ENCODE measurements at regions of chr1 and their contacts with region 1.

Region 1: DNA sequence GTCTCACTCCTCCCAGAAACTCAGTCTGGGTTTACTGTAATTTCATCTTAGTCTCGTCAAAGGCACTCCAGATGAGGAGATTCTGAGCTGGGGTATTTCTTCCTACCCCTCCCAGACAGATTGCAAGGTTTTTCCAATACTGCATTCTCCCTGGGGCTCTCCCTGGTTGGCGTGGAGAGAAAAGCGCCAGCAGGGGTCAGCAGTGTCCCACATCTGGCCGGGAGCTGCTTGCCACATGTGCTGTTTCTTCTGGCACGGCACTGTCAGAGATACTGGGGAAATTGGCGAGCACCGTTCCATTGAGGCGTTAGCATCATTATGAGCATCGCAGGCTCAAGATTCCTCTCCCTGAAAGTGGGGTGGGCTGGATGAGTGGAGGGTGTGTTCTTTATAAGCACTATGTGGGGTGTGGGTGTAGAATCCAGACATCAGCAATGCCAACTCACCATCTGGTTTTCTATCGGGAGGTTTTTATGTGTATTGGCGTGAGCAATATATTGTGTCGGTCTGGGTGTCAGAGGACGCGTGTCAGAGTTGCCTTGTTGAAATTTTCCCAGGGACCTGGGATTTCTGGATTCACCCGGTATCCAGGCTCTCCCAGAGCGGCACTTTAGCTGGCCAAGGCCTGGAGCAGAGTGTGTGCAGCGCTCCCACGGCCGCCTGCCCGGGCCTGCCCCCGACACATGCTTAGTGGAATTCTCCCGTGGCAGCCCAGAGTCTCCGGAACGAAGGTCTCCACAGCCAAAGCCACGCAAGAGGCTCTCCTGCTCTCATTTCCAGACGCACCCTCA is 8.0 kb upstream of the NAV1 start:
- DNase-seq: peak; percentile 90

Region 2: GRCh38 chr1:201593200-201593921 is 62.4 kb after region 1 on chr1:
- intact Hi-C with region 1: loop called (anchors 10 kb)
- DNase-seq: no peak

Measured in cardiac septum (tissue), 1 donor.